Activated T-helper 2 cell treated with anti-CD3 and anti-CD28 coated beads, Interferon-gamma antibody, Interleukin-2, Interleukin-4, amounts not matched to agents 10 μg/mL and 5 μg/mL and 100 μg/mL, durations not matched to agents 14 hours and 24 hours and 36 hours (primary cell): ENCODE measurements at regions of chr14 and their contacts with region 1.

Region 1: GRCh38 chr14:71138448-71139293 is 231.4 kb downstream of the PCNX1 start:
- DNase-seq: peak; percentile 48
- H3K4me3 Mint-ChIP-seq: no peak overlapping the region
- H3K27ac Mint-ChIP-seq: no peak overlapping the region
- H3K4me1 Mint-ChIP-seq: peaks cover 48% of the 10 kb centered on the region
- H3K27me3 Mint-ChIP-seq: no peaks in the 10 kb centered on the region

Region 2: GRCh38 chr14:71031000-71031399 is 107.7 kb before region 1 on chr14:
- intact Hi-C with region 1: no loop called
- DNase-seq: no peak
- H3K4me3 Mint-ChIP-seq: no peak overlapping the region
- H3K27ac Mint-ChIP-seq: no peak overlapping the region
- H3K4me1 Mint-ChIP-seq: no peaks in the 10 kb centered on the region
- H3K27me3 Mint-ChIP-seq: no peaks in the 10 kb centered on the region

Region 3: DNA sequence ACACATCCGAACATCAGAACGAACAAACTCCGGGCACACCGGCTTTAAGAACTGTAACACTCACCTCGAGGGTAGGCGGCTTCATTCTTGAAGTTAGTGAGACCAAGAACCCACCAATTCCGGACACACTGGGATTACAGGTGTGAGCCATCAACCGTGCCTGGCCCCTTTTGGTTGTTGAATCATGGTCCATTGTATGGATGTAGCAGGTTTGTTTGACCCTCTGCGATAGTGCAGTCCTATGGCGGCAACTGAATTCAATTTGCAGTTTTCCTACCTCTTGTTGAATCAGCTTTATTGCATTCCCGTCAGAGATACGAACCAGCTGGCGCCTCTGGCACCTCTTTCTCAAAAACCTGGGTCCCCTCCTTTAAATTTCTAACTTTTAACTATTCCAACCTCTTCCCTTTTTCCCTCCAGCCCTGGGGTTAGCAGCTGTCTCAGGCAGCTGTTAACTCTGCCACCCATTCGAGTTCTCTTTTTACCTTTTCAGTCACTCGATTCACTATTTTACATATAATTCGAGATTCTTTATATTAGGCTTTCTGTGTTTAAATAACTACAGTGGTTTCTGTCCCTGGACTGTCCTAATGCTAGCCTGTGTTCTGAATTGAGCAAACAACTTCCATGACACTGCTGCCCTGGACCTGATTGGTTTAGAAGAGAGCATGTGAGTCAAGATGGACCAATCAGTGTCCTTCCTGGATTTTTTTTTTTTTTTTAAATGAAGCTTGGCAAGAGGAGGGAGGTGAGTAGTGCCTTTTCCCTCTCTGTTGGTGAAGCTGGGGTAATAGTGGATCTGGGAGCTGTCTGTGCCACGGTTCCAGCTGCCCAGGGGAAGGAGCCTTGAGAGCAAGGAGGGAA is 30.1 kb after region 1 on chr14:
- intact Hi-C with region 1: loop called (anchors 2 kb)
- DNase-seq: no peak
- H3K4me3 Mint-ChIP-seq: peak overlapping the region; percentile 76
- H3K27ac Mint-ChIP-seq: peak overlapping the region; percentile 53
- H3K4me1 Mint-ChIP-seq: peaks cover 17% of the 10 kb centered on the region
- H3K27me3 Mint-ChIP-seq: peaks cover 8% of the 10 kb centered on the region

Region 4: GRCh38 chr14:71267007-71267513 is 128.4 kb after region 1 on chr14:
- intact Hi-C with region 1: loop called (anchors 1 kb)
- DNase-seq: no peak
- H3K4me3 Mint-ChIP-seq: peak overlapping the region; percentile 41
- H3K27ac Mint-ChIP-seq: peak overlapping the region; percentile 86
- H3K4me1 Mint-ChIP-seq: peaks cover 44% of the 10 kb centered on the region
- H3K27me3 Mint-ChIP-seq: no peaks in the 10 kb centered on the region

Region 5: GRCh38 chr14:71331403-71331802 is 192.7 kb after region 1 on chr14:
- intact Hi-C with region 1: loop called (anchors 1 kb)
- DNase-seq: no peak
- H3K4me3 Mint-ChIP-seq: no peak overlapping the region
- H3K27ac Mint-ChIP-seq: peak overlapping the region; percentile 65
- H3K4me1 Mint-ChIP-seq: peaks cover 58% of the 10 kb centered on the region
- H3K27me3 Mint-ChIP-seq: no peaks in the 10 kb centered on the region

Region 6: DNA sequence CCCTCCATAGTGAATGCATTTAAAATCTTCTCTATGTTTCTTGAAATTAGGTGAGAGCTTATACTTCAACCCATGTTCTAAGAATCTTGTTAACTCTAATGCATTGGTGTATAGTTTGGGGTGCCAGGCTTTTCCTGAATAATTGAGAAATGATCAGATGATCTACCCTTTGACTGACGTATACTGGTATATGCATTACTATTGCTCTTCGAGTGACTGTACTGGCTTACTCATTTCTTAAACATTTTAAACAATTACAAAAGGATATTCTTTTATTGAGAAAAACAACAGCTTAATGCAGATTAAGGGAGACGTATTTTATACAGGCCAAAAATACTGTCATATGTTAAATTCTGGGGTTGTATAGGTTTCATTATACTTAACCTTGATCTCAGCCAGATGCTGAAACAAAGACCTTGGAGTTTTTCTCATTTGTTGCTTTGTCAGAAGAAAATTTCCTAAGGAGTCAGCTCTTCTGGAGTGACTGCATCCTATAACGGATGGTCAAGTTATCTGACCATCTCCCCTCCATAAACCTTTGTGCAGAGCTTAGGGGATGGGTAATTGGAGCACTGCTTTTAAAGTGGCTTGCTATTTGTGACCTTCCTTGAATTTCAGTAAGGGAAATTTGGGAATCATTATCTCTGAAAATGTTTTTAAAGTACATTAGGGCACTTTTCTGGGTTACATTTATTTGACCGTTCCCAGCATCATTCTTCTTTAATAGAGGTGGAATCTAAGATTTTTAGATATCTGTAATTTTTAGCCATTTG is 276.1 kb after region 1 on chr14:
- intact Hi-C with region 1: loop called (anchors 1 kb)
- DNase-seq: no peak
- H3K4me3 Mint-ChIP-seq: no peak overlapping the region
- H3K27ac Mint-ChIP-seq: no peak overlapping the region
- H3K4me1 Mint-ChIP-seq: peaks cover 38% of the 10 kb centered on the region
- H3K27me3 Mint-ChIP-seq: no peaks in the 10 kb centered on the region

Region 7: GRCh38 chr14:71597955-71598660 is 459.4 kb after region 1 on chr14:
- intact Hi-C with region 1: loop called (anchors 2 kb)
- DNase-seq: no peak
- H3K4me3 Mint-ChIP-seq: peak overlapping the region; percentile 1
- H3K27ac Mint-ChIP-seq: peak overlapping the region; percentile 29
- H3K4me1 Mint-ChIP-seq: peaks cover 63% of the 10 kb centered on the region
- H3K27me3 Mint-ChIP-seq: no peaks in the 10 kb centered on the region

Region 8: GRCh38 chr14:71711619-71712018 is 572.9 kb after region 1 on chr14:
- intact Hi-C with region 1: loop called (anchors 2 kb)
- DNase-seq: no peak
- H3K4me3 Mint-ChIP-seq: no peak overlapping the region
- H3K27ac Mint-ChIP-seq: peak overlapping the region; percentile 83
- H3K4me1 Mint-ChIP-seq: peaks cover 32% of the 10 kb centered on the region
- H3K27me3 Mint-ChIP-seq: no peaks in the 10 kb centered on the region